Gastrocnemius medialis (tissue), 4 donors: ENCODE measurements at regions of chr12 and their contacts with region 1.

Region 1: DNA sequence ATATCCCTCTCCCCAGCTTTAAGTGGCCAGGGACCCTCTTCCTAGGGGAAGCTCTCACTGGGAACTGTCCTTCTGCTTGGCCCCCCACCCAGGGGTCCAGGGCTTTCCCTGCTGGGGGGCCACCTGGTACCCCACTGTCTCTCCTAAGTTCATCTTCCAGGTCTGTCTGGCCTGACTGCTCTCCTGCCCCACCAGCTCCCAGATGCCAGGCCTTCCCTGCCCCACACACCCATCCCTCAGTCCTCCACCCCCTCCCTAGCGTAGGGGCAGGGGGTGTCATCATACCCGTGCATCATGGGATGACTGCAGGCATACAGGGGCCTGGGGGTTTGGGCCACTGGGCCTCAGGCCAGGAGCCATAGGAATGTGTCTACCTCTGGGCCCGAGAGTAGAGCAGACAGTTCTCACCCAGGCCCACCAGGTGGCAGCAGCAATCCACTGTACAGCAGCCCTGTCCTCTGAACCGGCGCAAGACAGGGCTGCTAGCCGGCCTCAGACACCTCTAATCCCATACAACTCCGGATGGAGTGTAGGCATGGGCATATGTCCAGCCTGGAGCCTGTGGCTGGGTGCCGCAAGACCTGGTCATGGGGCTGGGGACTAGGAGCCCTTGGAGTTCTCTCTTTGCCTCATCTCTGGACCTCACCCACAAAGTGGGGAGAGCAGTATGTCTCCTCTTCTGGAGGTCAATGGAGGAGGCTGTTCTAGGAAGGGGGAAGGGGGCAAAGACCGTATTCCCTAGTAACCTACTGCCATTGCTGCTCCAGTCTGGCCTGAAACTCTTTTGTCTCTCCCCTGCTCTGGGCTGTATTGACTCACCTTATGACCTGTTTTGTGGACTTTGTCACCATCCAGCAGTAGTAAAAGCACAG is 10.0 kb upstream of the SMARCD1 start:
- DNase-seq: peak; percentile 62 to 77
- ATAC-seq: peak; percentile 88 to 89
- H3K4me3 ChIP-seq: no peak overlapping the region
- H3K27ac ChIP-seq: no peak overlapping the region
- H3K4me1 ChIP-seq: peaks cover 0 to 3% of the 10 kb centered on the region in 2 donors
- H3K27me3 ChIP-seq: no peaks in the 10 kb centered on the region
- CTCF ChIP-seq: peak; percentile 94 to 97 (median 95)
- POLR2A ChIP-seq: no peak

Region 2: DNA sequence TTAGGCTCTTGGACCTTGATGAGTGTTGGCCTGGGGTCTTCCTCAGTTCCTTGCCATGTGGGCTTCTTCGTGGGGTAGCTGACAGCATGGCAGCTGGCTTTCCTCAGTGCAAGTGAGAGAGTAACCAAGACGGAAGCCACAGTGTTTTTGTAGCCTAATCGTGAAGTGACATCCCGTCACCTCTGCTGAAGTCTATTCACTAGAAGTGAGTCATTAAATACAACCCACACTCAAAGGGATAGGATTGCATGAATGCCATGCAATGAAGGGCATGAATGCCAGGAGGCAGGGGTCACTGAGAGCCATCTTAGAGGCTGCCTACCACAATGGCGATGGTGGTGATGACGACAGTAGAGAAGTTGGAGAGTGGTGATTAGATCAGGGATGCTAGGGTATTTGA is 31.3 kb before region 1 on chr12:
- in situ Hi-C with region 1: no loop called
- intact Hi-C with region 1: loop called (anchors 1 kb)
- DNase-seq: no peak
- ATAC-seq: no peak
- H3K4me3 ChIP-seq: no peak overlapping the region
- H3K27ac ChIP-seq: no peak overlapping the region
- H3K4me1 ChIP-seq: no peaks in the 10 kb centered on the region
- H3K27me3 ChIP-seq: peaks cover 0 to 9% (median 4%) of the 10 kb centered on the region in 3 donors
- CTCF ChIP-seq: no peak
- POLR2A ChIP-seq: no peak